ENCODE measurements at regions of chr12 and their contacts with region 1.

Region 1: DNA sequence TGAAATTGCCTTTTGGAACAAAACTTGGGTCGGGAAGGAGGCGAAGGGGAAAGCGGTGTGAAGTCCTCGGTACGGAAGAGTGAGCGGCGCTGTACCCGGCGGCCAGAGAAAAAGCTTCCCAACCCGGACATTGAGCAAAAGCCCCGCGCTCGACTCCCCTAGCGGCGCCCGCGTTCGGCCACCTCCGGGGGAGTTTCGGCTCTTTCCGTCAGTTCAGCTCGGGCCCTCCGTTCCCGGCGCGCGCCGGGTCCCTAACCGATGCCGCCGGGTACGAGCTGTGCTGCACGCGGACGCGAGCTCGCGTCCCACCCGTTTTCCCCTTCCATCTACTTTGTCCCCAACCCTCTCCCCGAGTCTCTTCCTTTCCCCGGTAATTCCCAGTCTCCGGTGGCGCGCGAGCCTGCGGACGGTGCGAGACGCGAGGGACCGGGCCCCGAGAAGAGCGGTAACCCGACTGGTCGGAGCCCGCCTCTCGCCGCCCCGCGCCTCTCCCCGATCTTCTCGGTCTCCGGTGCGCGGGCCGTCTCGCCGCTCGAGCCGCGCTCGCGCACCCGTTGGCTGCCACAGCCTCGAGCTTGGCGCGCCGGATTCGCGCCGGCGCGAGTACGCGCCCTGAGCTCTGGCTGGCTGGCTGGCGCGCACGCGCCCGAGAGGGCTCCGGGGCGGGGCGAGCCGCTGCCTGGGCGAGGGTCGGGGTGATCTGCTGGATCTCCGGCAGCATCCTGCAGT is 446 bp upstream of the SPATS2 start:
- DNase-seq: peak; percentile 90
- H3K4me3 Mint-ChIP-seq: peak overlapping the region; percentile 86
- H3K27ac Mint-ChIP-seq: peak overlapping the region; percentile 95
- H3K4me1 Mint-ChIP-seq: peaks cover 35% of the 10 kb centered on the region
- H3K27me3 Mint-ChIP-seq: no peaks in the 10 kb centered on the region

Region 2: DNA sequence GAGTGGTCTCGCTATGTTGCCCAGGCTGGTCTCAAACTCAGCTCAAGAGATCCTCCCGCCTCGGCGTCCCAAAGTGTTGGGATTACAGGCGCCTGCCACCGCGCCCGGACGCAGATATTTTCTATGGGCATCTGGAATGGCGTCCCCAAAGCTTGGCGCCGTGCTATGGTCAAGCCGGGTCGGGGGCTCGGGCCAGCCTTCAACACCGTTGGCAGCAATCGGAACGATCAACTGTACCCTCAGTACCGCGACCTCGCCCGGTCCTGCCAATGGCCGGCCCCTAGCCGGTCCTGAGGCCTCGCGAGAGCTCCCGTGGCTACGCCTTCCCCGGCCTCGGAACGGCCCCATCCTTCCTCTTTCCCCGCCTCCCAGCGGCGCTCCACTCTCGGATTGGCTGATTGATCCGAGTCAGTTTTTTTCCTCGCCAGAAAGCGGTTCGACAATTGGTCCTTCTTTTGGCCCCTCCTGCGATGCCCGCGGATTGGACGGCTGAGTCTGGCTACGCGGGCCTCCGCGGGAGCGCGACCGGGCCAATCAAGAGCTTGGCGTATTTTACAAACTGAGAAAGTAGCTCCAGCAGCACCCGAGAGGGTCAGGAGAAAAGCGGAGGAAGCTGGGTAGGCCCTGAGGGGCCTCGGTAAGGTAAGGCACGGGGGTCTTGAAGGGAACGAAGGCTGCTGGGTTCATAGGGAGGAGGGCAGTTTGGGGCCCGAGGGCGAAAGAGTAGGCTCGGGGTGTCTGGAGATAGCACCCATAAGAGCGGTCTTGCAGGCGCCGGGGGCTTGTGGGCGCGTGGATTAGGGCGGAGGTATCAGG is 43.9 kb before region 1 on chr12 and contains the start of gene TROAP:
- intact Hi-C with region 1: loop called (anchors 2 kb)
- DNase-seq: peak; percentile 98
- H3K4me3 Mint-ChIP-seq: peak within 1 kb of the TSS; percentile 99
- H3K27ac Mint-ChIP-seq: peak within 1 kb of the TSS; percentile 82
- H3K4me1 Mint-ChIP-seq: peaks cover 13% of the 10 kb centered on the region
- H3K27me3 Mint-ChIP-seq: peaks cover 3% of the 10 kb centered on the region
- total RNA-seq, gene TROAP: 58.3 and 59.3 TPM in 2 replicates

Region 3: DNA sequence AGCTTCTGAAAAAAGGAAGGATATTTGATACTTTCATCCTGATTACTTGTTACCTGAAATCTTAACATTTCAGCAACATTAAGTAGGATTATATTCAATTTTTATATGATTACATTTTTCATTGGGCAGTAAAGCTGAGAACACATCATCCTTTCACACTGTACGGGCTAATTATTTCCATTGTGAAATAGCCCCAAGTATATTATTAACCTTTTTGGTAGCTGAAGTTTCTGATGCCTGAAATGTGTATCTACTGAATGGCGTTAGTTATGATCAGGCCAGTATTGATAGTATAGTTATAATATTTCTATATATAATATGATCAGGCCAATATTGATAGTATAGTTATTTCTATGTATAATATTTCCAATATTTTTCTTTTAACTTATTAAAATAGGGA is 10.6 kb after region 1 on chr12:
- intact Hi-C with region 1: no loop called
- DNase-seq: no peak
- H3K4me3 Mint-ChIP-seq: no peak overlapping the region
- H3K27ac Mint-ChIP-seq: no peak overlapping the region
- H3K4me1 Mint-ChIP-seq: peaks cover 12% of the 10 kb centered on the region
- H3K27me3 Mint-ChIP-seq: no peaks in the 10 kb centered on the region

Region 4: GRCh38 chr12:49388682-49389386 is 22.0 kb after region 1 on chr12:
- intact Hi-C with region 1: loop called (anchors 1 kb)
- DNase-seq: peak; percentile 58
- H3K4me3 Mint-ChIP-seq: no peak overlapping the region
- H3K27ac Mint-ChIP-seq: no peak overlapping the region
- H3K4me1 Mint-ChIP-seq: peaks cover 5% of the 10 kb centered on the region
- H3K27me3 Mint-ChIP-seq: no peaks in the 10 kb centered on the region

Region 5: GRCh38 chr12:49451468-49452259 is 84.8 kb after region 1 on chr12:
- intact Hi-C with region 1: loop called (anchors 5 kb)
- DNase-seq: no peak
- H3K4me3 Mint-ChIP-seq: peak overlapping the region; percentile 11
- H3K27ac Mint-ChIP-seq: peak overlapping the region; percentile 71
- H3K4me1 Mint-ChIP-seq: peaks cover 16% of the 10 kb centered on the region
- H3K27me3 Mint-ChIP-seq: no peaks in the 10 kb centered on the region

Region 6: GRCh38 chr12:49567611-49568441 is 201.0 kb after region 1 on chr12 and contains the start of gene MCRS1:
- intact Hi-C with region 1: loop called (anchors 5 kb)
- DNase-seq: peak; percentile 87
- H3K4me3 Mint-ChIP-seq: peak within 1 kb of the TSS; percentile 99
- H3K27ac Mint-ChIP-seq: peak within 1 kb of the TSS; percentile 99
- H3K4me1 Mint-ChIP-seq: peaks cover 42% of the 10 kb centered on the region
- H3K27me3 Mint-ChIP-seq: no peaks in the 10 kb centered on the region
- total RNA-seq, gene MCRS1: 67.9 and 73.0 TPM in 2 replicates

Region 7: GRCh38 chr12:49740930-49741881 is 374.4 kb after region 1 on chr12 and contains the start of gene TMBIM6:
- intact Hi-C with region 1: loop called (anchors 10 kb)
- DNase-seq: peak; percentile 99
- H3K4me3 Mint-ChIP-seq: peak within 1 kb of the TSS; percentile 88
- H3K27ac Mint-ChIP-seq: peak within 1 kb of the TSS; percentile 96
- H3K4me1 Mint-ChIP-seq: peaks cover 27% of the 10 kb centered on the region
- H3K27me3 Mint-ChIP-seq: peaks cover 4% of the 10 kb centered on the region
- total RNA-seq, gene TMBIM6: 405 and 431 TPM in 2 replicates